Activated CD8-positive, alpha-beta memory T cell treated with anti-CD3 and anti-CD28 coated beads, Interleukin-2, amount 10 ng/mL, durations not matched to agents 7 days and 5 days (primary cell): ENCODE measurements at regions of chr20 and their contacts with region 1.

Region 1: GRCh38 chr20:2451939-2452732 is 18.5 kb downstream of the SNRPB start:
- DNase-seq: peak; percentile 76
- ATAC-seq: peak; percentile 59
- H3K4me3 Mint-ChIP-seq: no peak overlapping the region
- H3K27ac Mint-ChIP-seq: no peak overlapping the region
- H3K4me1 Mint-ChIP-seq: peaks cover 19% of the 10 kb centered on the region
- H3K27me3 Mint-ChIP-seq: peaks cover 5% of the 10 kb centered on the region

Region 2: DNA sequence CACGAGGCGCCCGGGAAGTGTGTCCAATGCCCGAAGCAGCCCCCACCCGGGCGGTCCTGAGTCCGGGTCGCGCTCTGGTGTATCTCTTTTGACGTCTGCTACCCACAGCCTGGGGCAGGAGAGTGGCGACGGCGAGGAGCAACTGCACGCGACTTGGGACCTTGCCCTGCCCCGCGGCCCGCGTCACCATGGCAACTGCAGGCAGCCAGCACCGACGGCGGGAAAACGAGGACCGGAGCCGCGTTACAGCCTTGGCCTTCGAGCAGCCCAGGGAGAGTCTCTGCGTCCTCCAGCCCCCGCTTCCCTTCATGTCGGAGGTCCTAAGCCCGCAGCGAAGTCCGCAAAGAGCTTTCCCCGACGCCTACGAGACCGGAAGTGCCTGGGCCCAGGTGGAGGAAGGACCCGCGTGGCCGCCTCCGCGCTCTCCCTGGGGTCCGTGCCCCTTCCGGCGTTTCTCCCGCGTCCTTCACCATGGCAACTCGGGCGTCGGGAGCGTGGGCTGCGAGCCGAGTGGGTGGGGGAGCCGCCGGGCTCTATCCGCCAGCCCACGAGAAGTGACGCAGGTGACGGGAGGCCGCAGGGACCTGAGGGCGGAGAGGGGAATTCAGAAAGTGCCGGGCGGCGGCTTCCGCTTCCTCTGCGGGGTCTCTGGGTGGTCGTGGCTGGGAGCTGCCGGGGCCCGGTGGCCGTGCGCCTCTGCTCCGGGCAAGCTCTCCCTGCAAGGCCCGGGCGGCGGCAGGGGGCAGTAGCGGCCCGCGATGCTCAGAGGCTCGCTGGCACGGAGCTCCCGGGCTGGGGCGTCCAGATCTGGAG is 245.0 kb before region 1 on chr20:
- CTCF ChIA-PET with region 1: interaction called, 19 read pairs
- DNase-seq: peak; percentile 72
- ATAC-seq: peak; percentile 87
- H3K4me3 Mint-ChIP-seq: peak overlapping the region; percentile 57
- H3K27ac Mint-ChIP-seq: no peak overlapping the region
- H3K4me1 Mint-ChIP-seq: peaks cover 4% of the 10 kb centered on the region
- H3K27me3 Mint-ChIP-seq: peaks cover 62% of the 10 kb centered on the region

Region 3: DNA sequence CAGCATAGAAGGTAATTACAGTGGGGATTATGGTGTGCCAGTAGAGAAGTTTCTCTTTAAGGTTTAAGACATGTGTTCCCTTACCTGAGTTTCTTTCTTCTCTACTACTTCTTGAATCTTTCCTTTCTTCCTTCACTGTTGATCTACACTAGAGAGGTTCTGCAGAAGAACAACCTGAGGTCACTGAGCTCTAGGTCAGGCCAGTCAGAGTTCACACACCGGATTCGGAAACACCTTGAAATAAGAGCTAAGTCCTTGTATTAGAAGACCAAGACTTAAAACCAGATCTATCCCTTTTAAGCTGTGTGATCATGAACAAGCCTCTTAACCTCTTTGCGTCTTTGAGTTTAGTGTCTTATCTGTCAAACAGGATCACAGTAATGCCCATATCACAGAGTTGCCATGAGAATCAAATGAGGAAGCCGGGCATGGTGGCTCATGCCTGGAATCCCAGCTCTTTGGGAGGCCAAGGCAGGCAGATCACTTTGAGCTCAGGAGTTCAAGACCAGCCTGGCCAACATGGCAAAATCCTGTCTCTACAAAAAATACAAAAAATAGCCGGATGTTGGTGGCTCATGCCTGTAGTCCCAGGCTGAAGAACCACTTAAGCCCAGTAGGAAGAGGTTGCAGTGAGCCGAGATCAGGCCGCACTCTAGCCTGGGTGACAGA is 178.4 kb before region 1 on chr20:
- CTCF ChIA-PET with region 1: no interaction called
- DNase-seq: no peak
- ATAC-seq: no peak
- H3K4me3 Mint-ChIP-seq: no peak overlapping the region
- H3K27ac Mint-ChIP-seq: no peak overlapping the region
- H3K4me1 Mint-ChIP-seq: no peaks in the 10 kb centered on the region
- H3K27me3 Mint-ChIP-seq: peaks cover 35% of the 10 kb centered on the region

Region 4: GRCh38 chr20:2387180-2387577 is 65.0 kb before region 1 on chr20:
- CTCF ChIA-PET with region 1: interaction called, 28 read pairs
- DNase-seq: peak; percentile 76
- ATAC-seq: peak; percentile 83
- H3K4me3 Mint-ChIP-seq: peak overlapping the region; percentile 32
- H3K27ac Mint-ChIP-seq: peak overlapping the region; percentile 52
- H3K4me1 Mint-ChIP-seq: peaks cover 8% of the 10 kb centered on the region
- H3K27me3 Mint-ChIP-seq: peaks cover 3% of the 10 kb centered on the region

Region 5: DNA sequence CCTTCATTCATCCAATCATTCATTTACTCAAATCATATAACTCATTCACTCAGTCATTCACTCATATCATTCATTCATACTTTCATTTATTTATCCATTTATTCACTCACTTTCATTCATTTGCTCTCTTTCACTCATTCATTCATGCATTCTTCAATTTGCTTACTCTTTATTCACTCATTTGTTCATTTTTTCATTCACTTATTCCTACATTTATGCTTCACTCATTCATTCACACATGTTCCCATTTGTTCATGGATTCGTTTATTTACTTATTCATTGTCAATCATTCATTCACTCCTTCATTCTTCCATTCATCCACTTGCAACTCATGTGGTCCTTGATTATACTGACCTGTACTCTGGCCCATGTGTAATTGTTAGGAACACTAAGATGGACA is 21.0 kb before region 1 on chr20:
- CTCF ChIA-PET with region 1: interaction called, 11 read pairs
- DNase-seq: no peak
- ATAC-seq: no peak
- H3K4me3 Mint-ChIP-seq: no peak overlapping the region
- H3K27ac Mint-ChIP-seq: no peak overlapping the region
- H3K4me1 Mint-ChIP-seq: no peaks in the 10 kb centered on the region
- H3K27me3 Mint-ChIP-seq: peaks cover 16% of the 10 kb centered on the region

Region 6: GRCh38 chr20:2470423-2471193 is 18.5 kb after region 1 on chr20 and contains the start of gene SNRPB:
- CTCF ChIA-PET with region 1: interaction called, 39 read pairs
- DNase-seq: peak; percentile 99
- ATAC-seq: peak; percentile 95
- H3K4me3 Mint-ChIP-seq: peak within 1 kb of the TSS; percentile 100
- H3K27ac Mint-ChIP-seq: peak within 1 kb of the TSS; percentile 99
- H3K4me1 Mint-ChIP-seq: peaks cover 54% of the 10 kb centered on the region
- H3K27me3 Mint-ChIP-seq: no peaks in the 10 kb centered on the region
- total RNA-seq, gene SNRPB: 335 to 391 TPM

Region 7: DNA sequence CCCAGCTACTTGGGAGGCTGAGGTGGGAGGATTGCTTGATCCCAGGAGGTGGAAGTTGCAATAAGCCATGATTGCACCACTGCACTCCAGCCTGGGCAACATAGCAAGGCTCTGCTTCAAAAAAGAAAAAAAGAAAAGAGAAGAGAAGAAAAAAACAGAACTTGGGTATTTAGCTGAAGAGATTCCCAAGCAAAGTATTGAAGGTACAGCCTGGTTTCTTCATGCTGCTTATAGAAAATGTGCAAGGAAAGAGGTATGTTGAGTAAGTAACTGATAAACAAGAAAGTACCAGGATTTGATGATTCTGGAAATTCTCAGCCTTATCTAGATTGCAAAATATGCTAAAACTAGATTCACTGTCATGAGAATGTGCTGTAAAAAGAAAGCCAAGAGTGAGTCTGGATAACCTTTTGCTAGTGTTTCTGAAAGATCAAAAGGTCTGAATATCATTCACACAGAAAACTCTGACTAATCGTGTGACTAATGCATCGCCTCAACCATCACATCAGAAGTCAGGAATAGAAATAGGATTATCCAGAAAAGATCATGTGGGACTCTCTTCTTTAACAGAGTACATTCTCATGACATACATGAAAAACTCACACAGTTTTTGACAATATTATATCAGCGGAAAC is 167.9 kb after region 1 on chr20:
- CTCF ChIA-PET with region 1: no interaction called
- DNase-seq: no peak
- ATAC-seq: no peak
- H3K4me3 Mint-ChIP-seq: no peak overlapping the region
- H3K27ac Mint-ChIP-seq: no peak overlapping the region
- H3K4me1 Mint-ChIP-seq: no peaks in the 10 kb centered on the region
- H3K27me3 Mint-ChIP-seq: peaks cover 40% of the 10 kb centered on the region